MCF 10A (cell line): ENCODE measurements at regions of chr20 and their contacts with region 1.

Region 1: DNA sequence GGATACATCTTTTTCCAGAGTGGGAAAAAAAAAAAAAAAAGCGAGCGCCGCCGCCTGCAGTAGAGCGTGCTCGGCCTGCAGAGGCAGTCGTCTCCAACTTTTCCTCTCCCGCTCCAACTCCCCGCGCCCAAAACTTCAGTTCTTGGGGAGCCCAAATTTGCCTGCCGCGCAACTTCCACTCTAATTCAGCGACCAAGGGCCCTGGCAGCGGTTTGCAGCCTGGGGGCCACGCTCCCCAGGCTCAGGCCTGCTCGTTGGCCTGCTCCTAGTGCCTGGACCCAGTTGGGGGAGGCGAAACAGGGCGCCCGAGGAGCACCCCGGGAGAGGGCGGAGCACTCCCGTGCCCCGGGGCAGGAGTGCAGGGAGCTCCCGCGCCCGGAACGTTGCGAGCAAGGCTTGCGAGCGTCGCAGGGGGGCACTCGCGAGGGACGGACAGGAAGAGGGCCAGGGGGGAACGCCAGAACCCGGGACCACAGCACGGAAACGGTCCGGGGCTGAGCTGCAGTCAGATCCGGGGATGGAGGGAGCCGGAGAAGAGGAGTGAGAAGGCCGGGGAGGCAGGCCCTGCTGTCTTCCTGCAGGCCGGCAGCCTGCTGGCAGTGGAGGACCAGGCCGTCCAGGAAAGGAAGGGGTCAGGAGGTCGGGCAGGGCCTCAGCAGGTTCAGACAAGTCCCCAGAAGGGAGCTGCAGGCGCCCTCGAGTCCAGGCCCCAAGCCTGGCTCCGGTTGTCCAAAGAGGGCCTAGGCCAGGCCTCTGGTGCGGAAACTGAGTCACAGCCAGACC is at the start of gene STX16:
- DNase-seq: peak; percentile 95
- H3K4me3 Mint-ChIP-seq: peak within 1 kb of the TSS; percentile 96
- H3K27ac Mint-ChIP-seq: peak within 1 kb of the TSS; percentile 99
- H3K4me1 Mint-ChIP-seq: peaks cover 17% of the 10 kb centered on the region
- H3K27me3 Mint-ChIP-seq: no peaks in the 10 kb centered on the region
- CTCF ChIP-seq: peak; percentile 29
- total RNA-seq, gene STX16: 93.3 and 108 TPM in 2 replicates

Region 2: GRCh38 chr20:58236612-58237330 is 414.2 kb before region 1 on chr20:
- CTCF ChIA-PET with region 1: interaction called, 8 read pairs
- POLR2A ChIA-PET with region 1: interaction called, 25 read pairs
- intact Hi-C with region 1: loop called (anchors 1 kb)
- DNase-seq: peak; percentile 71
- H3K4me3 Mint-ChIP-seq: peak overlapping the region; percentile 77
- H3K27ac Mint-ChIP-seq: no peak overlapping the region
- H3K4me1 Mint-ChIP-seq: no peaks in the 10 kb centered on the region
- H3K27me3 Mint-ChIP-seq: no peaks in the 10 kb centered on the region
- CTCF ChIP-seq: peak; percentile 96

Region 3: GRCh38 chr20:58309575-58310290 is 341.2 kb before region 1 on chr20 and contains the start of gene RAB22A:
- CTCF ChIA-PET with region 1: interaction called, 3 read pairs
- POLR2A ChIA-PET with region 1: interaction called, 15 read pairs
- intact Hi-C with region 1: loop called (anchors 5 kb)
- DNase-seq: peak; percentile 68
- H3K4me3 Mint-ChIP-seq: peak within 1 kb of the TSS; percentile 82
- H3K27ac Mint-ChIP-seq: peak within 1 kb of the TSS; percentile 71
- H3K4me1 Mint-ChIP-seq: peaks cover 18% of the 10 kb centered on the region
- H3K27me3 Mint-ChIP-seq: no peaks in the 10 kb centered on the region
- CTCF ChIP-seq: no peak
- total RNA-seq, gene RAB22A: 18.4 and 18.9 TPM in 2 replicates

Region 4: DNA sequence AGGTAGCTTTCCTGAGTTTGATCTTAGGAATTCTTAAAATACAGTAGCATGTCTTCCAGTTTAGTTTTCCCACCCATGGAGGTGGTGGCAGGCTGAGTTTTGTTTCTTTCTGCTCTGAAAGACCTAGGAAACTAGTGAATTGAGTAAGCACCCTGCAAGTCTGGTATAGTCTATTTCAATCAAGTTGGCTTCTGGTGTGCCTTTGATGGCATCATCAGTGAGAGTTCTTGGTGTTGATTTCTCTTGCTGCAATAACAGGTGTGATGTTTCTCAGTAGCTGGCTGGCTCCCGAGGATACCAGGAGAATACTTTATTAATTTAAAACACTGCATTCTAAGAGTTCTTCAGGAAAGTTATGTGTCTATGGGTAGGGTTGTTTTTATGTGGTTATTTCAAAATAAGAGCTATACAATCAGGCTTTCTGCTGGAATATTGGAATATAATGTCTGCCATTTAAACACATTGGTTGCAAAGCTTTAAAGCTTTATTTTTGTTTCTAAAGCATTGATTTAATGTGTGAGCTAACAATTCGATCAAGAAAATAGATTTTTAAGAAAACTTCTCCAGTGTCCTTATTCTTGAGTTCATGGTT is 242.9 kb before region 1 on chr20:
- CTCF ChIA-PET with region 1: no interaction called
- POLR2A ChIA-PET with region 1: interaction called, 17 read pairs
- intact Hi-C with region 1: no loop called
- DNase-seq: peak; percentile 54
- H3K4me3 Mint-ChIP-seq: peak overlapping the region; percentile 56
- H3K27ac Mint-ChIP-seq: no peak overlapping the region
- H3K4me1 Mint-ChIP-seq: peaks cover 21% of the 10 kb centered on the region
- H3K27me3 Mint-ChIP-seq: no peaks in the 10 kb centered on the region
- CTCF ChIP-seq: no peak

Region 5: DNA sequence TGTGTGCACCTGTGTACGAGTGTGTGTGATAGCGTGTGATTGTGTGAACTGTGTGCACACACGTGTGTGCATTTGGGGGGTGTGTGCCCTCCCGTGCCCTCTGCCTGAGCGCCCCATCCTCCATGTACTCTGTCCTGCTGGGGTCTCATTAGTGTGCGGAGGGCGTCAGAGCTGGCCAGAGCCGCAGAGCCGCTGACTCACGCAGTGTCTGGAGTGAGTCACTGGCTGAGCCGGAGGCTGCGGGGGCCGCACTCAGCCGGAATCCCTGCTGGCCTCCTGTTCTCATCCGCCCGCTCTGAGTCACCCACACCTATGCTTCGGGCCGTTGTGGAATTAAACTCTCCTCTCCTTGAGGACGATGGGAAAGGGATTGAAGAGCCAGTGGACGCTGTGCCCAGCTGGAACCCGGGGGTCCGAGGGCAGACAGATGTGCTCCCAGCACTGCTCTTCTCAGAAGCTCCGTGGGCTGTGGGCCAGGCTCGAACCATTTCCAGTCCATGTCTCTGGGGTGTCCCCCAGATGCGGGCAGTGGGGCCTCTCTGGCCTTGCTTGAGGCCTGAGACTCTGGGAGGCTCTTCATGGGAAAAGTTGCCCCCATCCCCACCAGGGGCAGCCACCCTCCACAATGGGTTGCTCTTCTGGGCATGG is 27.0 kb before region 1 on chr20:
- CTCF ChIA-PET with region 1: interaction called, 4 read pairs
- POLR2A ChIA-PET with region 1: interaction called, 14 read pairs
- intact Hi-C with region 1: no loop called
- DNase-seq: peak; percentile 94
- H3K4me3 Mint-ChIP-seq: no peak overlapping the region
- H3K27ac Mint-ChIP-seq: no peak overlapping the region
- H3K4me1 Mint-ChIP-seq: peaks cover 8% of the 10 kb centered on the region
- H3K27me3 Mint-ChIP-seq: no peaks in the 10 kb centered on the region
- CTCF ChIP-seq: no peak

Region 6: DNA sequence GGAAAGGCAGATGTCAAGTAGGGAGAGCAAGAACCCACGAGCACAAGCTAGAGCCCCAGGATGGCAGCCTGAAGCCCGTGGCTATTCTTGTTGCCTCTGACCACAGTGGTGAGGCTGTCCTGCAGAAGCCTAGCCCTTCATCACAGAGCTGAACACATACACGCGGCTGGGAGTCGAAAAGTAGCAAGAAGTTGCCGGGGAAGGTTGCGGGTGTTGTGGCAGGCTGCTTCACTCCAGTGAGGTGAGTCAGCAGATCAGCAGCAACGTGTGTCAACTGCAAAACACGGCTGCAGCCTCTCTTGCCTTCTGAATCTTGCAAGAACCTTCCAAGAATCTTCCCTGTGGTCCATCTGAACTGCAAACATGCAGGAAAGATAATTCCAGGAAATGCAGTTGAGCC is 10.5 kb before region 1 on chr20:
- CTCF ChIA-PET with region 1: interaction called, 4 read pairs
- POLR2A ChIA-PET with region 1: interaction called, 12 read pairs
- intact Hi-C with region 1: no loop called
- DNase-seq: peak; percentile 50
- H3K4me3 Mint-ChIP-seq: no peak overlapping the region
- H3K27ac Mint-ChIP-seq: no peak overlapping the region
- H3K4me1 Mint-ChIP-seq: peaks cover 10% of the 10 kb centered on the region
- H3K27me3 Mint-ChIP-seq: no peaks in the 10 kb centered on the region
- CTCF ChIP-seq: no peak

Region 7: DNA sequence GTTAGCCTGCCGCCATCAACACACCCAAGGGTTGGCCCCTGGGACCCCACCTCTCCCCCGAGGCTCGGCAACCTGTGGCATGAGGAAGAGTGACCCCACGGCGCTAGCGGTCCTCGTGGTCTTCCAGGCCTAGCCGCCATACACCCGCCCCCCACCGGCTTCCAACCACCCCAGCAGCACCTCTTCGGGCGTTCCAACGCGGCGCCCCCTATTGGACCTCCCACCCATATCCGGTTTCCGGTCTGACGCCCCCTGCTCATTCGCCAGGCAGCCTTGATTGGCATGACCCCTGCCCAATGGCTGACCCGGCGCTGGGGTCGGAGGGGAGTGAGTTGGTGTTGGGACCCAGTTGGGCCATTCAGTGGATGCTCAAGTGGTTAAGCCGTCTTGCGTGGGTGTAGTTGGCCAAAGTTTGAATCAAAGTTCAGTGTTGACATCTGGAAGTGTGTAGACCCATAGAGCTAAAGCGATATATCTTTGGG is 199.8 kb after region 1 on chr20 and contains the start of gene GNAS-AS1:
- CTCF ChIA-PET with region 1: interaction called, 15 read pairs
- POLR2A ChIA-PET with region 1: interaction called, 6 read pairs
- intact Hi-C with region 1: loop called (anchors 5 kb)
- DNase-seq: peak; percentile 79
- H3K4me3 Mint-ChIP-seq: peak within 1 kb of the TSS; percentile 88
- H3K27ac Mint-ChIP-seq: peak within 1 kb of the TSS; percentile 81
- H3K4me1 Mint-ChIP-seq: peaks cover 21% of the 10 kb centered on the region
- H3K27me3 Mint-ChIP-seq: peaks cover 42% of the 10 kb centered on the region
- CTCF ChIP-seq: no peak
- total RNA-seq, gene GNAS-AS1: 1.6 and 2.2 TPM in 2 replicates